ENCODE measurements at regions of chr1 and their contacts with region 1.

Region 1: DNA sequence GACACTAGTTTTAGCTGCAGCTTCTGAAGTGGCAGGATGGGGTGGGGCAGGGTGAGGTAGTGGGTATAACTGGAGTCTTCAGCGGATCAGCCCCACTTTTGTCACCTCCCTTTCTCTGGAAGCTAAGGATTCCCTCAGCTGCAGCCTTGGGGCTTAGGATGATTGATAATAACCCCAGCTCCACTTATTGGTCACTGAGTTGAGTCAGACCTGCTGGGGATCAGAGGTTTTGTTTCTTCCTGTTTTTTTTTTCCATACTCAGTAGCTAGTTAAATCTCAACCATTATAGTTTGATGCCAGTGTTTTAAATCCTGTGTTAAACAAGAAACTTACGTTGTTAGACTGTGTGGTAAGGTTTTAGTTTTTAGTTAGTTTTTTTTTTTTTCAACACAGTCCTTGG is 57.2 kb downstream of the LAMC1 start:
- DNase-seq: no peak
- H3K4me3 ChIP-seq: no peak overlapping the region
- H3K27ac ChIP-seq: no peak overlapping the region
- H3K4me1 ChIP-seq: peaks cover 3 to 47% (median 14%) of the 10 kb centered on the region in 4 donors
- H3K27me3 ChIP-seq: no peaks in the 10 kb centered on the region
- CTCF ChIP-seq: no peak
- EP300 ChIP-seq: no peak
- POLR2A ChIP-seq: no peak

Region 2: DNA sequence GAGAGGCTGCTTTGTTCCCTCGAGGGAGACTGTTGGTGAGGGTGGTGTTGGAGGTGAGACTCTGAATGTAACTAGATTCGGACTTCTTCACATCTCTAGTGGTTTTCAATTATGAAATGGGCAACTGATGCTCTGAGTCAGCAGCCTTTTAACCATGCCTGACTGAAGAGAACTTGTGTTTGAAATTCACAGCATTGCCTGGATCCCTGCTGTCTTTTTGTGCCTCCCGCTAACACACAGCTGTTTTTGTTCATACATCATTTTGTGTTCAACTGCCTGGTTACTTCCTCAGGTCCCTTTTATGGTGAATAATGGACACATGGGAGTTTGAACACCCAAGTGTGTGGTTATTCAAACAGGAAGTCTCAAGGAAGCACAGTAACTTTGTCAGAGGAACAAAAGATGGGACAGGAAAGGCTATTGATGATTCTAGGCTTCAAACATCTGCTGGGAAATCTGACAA is 40.4 kb before region 1 on chr1:
- in situ Hi-C with region 1: no loop called
- intact Hi-C with region 1: no loop called
- DNase-seq: no peak
- H3K4me3 ChIP-seq: no peak overlapping the region
- H3K27ac ChIP-seq: peak overlapping the region; percentile 36 to 62 (median 49)
- H3K4me1 ChIP-seq: peaks cover 13 to 62% (median 20%) of the 10 kb centered on the region in 4 donors
- H3K27me3 ChIP-seq: no peaks in the 10 kb centered on the region
- CTCF ChIP-seq: no peak
- EP300 ChIP-seq: no peak
- POLR2A ChIP-seq: no peak

Region 3: DNA sequence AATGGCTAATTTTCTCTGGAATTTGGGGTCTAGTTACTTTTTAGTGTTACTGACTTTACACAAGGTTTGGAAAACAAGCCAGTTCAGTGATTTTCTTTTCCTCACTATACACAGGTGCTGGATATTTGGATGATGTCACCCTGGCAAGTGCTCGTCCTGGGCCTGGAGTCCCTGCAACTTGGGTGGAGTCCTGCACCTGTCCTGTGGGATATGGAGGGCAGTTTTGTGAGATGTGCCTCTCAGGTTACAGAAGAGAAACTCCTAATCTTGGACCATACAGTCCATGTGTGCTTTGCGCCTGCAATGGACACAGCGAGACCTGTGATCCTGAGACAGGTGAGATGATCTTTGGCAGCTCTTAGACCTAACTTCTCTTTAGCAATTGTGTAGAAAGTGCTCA is 41.2 kb after region 1 on chr1:
- in situ Hi-C with region 1: no loop called
- intact Hi-C with region 1: loop called (anchors 2 kb)
- DNase-seq: no peak
- H3K4me3 ChIP-seq: no peak overlapping the region
- H3K27ac ChIP-seq: no peak overlapping the region
- H3K4me1 ChIP-seq: peaks cover 0 to 7% (median 0%) of the 10 kb centered on the region in 4 donors
- H3K27me3 ChIP-seq: no peaks in the 10 kb centered on the region
- CTCF ChIP-seq: no peak
- EP300 ChIP-seq: no peak
- POLR2A ChIP-seq: no peak

Measured in transverse colon (tissue), 4 donors.